ENCODE measurements at regions of chr16 and their contacts with region 1.

Region 1: GRCh38 chr16:75198135-75198600 is 8.8 kb downstream of the CTRB2 start:
- DNase-seq: no peak
- H3K4me3 Mint-ChIP-seq: no peak overlapping the region
- H3K27ac Mint-ChIP-seq: no peak overlapping the region
- H3K4me1 Mint-ChIP-seq: peaks cover 7% of the 10 kb centered on the region
- H3K27me3 Mint-ChIP-seq: peaks cover 18% of the 10 kb centered on the region

Region 2: DNA sequence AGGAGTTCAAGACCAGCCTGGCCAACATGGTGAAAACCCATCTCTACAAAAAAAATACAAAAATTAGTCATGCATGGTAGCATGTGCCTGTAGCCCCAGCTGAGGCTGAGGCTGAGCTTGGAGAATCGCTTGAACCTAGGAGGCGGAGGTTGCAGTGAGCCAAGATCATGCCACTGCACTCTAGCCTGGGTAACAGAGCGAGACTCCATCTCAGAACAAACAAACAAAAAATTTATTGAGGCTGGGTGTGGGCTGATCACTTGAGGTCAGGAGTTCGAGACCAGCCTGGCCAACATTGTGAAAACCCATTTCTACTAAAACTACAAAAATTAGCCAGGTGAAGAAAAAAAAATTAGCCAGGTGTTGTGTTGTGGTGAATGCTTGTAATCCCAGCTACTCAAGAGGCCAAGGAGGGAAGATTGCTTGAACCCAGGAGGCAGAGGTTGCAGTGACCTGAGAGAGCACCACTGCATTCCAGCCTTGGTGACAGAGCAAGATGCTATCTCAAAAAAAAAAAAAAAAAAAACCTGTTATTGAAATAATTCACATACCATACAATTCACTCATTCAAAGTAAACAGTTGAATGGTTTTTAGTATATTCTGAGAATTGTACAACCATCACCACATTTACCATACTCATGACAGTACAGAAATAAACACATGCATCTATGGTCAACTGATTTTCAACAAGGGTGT is 168.5 kb before region 1 on chr16:
- CTCF ChIA-PET with region 1: no interaction called
- POLR2A ChIA-PET with region 1: no interaction called
- DNase-seq: no peak
- H3K4me3 Mint-ChIP-seq: no peak overlapping the region
- H3K27ac Mint-ChIP-seq: no peak overlapping the region
- H3K4me1 Mint-ChIP-seq: peaks cover 12% of the 10 kb centered on the region
- H3K27me3 Mint-ChIP-seq: no peaks in the 10 kb centered on the region

Region 3: DNA sequence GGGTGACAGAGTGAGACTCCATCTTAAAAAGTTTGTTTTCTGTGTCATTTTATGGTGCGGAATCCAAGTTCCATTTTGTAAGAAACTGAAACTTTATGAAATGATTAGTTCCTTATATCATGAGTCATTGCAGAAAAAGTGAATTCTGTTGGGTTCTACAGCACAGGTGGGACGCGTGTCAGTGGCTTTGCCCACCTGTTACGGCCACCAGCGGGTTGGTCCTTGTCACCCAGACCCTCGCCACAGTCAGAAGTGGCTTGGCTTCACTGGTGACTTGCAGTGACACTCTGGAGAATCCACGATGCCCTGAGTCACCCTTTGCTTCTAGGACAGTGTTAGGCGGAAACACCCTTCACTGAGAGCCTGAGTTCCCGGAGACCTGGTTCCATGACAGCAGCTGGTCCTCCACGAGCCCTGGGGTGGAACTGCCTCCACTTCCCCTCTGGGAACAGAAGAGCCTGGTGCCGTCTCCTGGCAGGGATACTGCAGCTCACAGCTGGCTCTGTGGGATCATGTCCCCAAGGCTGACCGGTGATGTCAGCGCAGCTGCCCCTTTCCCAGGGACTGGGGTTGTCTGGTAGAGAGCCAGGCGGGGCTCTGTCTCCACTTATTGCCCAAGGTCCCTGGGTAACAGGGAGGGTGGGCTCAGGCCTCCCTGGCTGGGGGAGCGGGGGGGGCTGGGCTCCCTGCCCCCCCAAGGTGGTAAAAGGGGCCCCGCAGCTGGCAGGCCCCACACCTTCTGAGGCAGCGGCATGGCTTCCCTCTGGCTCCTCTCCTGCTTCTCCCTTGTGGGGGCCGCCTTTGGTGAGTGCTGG is 20.3 kb after region 1 on chr16 and contains the start of gene CTRB1:
- CTCF ChIA-PET with region 1: interaction called, 13 read pairs
- POLR2A ChIA-PET with region 1: no interaction called
- DNase-seq: no peak
- H3K4me3 Mint-ChIP-seq: peak within 1 kb of the TSS; percentile 63
- H3K27ac Mint-ChIP-seq: peak within 1 kb of the TSS; percentile 44
- H3K4me1 Mint-ChIP-seq: peaks cover 12% of the 10 kb centered on the region
- H3K27me3 Mint-ChIP-seq: no peaks in the 10 kb centered on the region
- total RNA-seq, gene CTRB1: not detected

Region 4: DNA sequence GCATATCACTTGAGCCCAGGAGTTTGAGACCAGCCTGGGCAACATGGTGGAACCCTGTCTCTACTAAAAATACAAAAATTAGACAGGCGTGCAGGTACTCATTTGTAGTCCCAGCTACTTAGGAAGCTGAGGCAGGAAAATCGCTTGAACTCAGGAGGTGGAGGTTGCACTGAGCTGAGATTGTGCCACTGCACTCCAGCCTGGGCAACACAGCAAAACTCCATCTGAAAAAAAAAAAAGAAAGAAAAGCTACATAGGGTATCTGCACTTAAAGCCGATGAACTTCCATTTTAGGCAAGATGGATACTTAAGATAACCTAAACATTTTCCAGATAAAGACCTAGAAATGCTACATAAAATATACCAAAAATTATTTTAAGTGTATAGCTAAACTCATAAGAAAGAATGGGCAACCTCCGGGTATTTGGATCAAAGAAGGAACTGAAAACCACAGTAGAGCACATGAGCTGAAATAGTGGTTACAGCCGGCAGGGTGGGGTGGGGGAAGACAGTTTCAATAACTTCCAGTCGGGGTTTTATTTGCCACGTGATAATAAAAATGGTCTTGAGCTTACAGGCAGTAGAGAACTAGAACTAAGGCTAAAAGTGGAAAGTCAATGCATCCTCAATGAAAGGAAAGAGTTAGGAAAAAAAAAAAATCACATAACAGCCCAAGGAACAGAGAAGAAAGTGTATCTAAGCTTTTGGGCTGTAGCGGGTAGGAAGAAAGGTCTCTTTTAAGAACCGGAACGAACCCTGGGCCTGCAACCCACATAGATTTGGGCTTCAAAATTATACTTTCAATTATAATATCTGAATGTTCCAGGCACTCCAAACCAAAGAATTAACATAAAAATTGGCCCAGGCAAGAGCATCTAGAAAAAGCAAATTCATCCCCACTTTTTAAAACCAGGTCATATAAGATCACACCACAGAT is 182.0 kb after region 1 on chr16:
- CTCF ChIA-PET with region 1: interaction called, 55 read pairs
- POLR2A ChIA-PET with region 1: interaction called, 3 read pairs
- DNase-seq: peak; percentile 59
- H3K4me3 Mint-ChIP-seq: peak overlapping the region; percentile 6
- H3K27ac Mint-ChIP-seq: peak overlapping the region; percentile 21
- H3K4me1 Mint-ChIP-seq: peaks cover 36% of the 10 kb centered on the region
- H3K27me3 Mint-ChIP-seq: peaks cover 43% of the 10 kb centered on the region

Region 5: GRCh38 chr16:75392911-75393310 is 194.7 kb after region 1 on chr16:
- CTCF ChIA-PET with region 1: interaction called, 55 read pairs
- POLR2A ChIA-PET with region 1: no interaction called
- DNase-seq: no peak
- H3K4me3 Mint-ChIP-seq: no peak overlapping the region
- H3K27ac Mint-ChIP-seq: no peak overlapping the region
- H3K4me1 Mint-ChIP-seq: peaks cover 8% of the 10 kb centered on the region
- H3K27me3 Mint-ChIP-seq: no peaks in the 10 kb centered on the region

Region 6: GRCh38 chr16:75464130-75464918 is 266.2 kb after region 1 on chr16 and contains the start of gene TMEM170A:
- CTCF ChIA-PET with region 1: interaction called, 11 read pairs
- POLR2A ChIA-PET with region 1: no interaction called
- DNase-seq: peak; percentile 99
- H3K4me3 Mint-ChIP-seq: peak within 1 kb of the TSS; percentile 90
- H3K27ac Mint-ChIP-seq: peak within 1 kb of the TSS; percentile 92
- H3K4me1 Mint-ChIP-seq: peaks cover 42% of the 10 kb centered on the region
- H3K27me3 Mint-ChIP-seq: no peaks in the 10 kb centered on the region
- total RNA-seq, gene TMEM170A: 30.8 to 33.9 TPM

Measured in activated CD4-positive, alpha-beta memory T cell treated with anti-CD3 and anti-CD28 coated beads, Interleukin-2, amount 10 ng/mL, durations not matched to agents 7 days and 5 days (primary cell).